ENCODE measurements at regions of chr12 and their contacts with region 1.

Region 1: GRCh38 chr12:24852420-24852819 is 96.5 kb downstream of the BCAT1 start:
- DNase-seq: no peak
- H3K4me3 ChIP-seq: no peak overlapping the region
- CTCF ChIP-seq: peak; percentile 10

Region 2: GRCh38 chr12:24770821-24771220 is 81.6 kb before region 1 on chr12:
- in situ Hi-C with region 1: no loop called
- DNase-seq: no peak
- H3K4me3 ChIP-seq: no peak overlapping the region
- CTCF ChIP-seq: no peak

Region 3: GRCh38 chr12:24814379-24815113 is 37.9 kb before region 1 on chr12:
- in situ Hi-C with region 1: no loop called
- DNase-seq: no peak
- H3K4me3 ChIP-seq: no peak overlapping the region
- CTCF ChIP-seq: no peak

Region 4: GRCh38 chr12:24948757-24949722 is 96.6 kb after region 1 on chr12 and contains the start of gene BCAT1:
- in situ Hi-C with region 1: loop called (anchors 10 kb)
- DNase-seq: no peak
- H3K4me3 ChIP-seq: peak within 1 kb of the TSS; percentile 80
- CTCF ChIP-seq: peak; percentile 24